ENCODE measurements at regions of chr14 and their contacts with region 1.

Region 1: GRCh38 chr14:35140718-35141581 is 18.6 kb downstream of the PRORP start:
- DNase-seq: no peak
- ATAC-seq: peak; percentile 60
- H3K4me3 ChIP-seq: no peak overlapping the region
- H3K27ac ChIP-seq: no peak overlapping the region
- H3K4me1 ChIP-seq: peaks cover 10% of the 10 kb centered on the region
- H3K27me3 ChIP-seq: no peaks in the 10 kb centered on the region
- CTCF ChIP-seq: peak in 2 of 3 experiments; percentile 11 to 23; a peak in 3 of 6 replicates
- EP300 ChIP-seq: no peak
- POLR2A ChIP-seq: no peak
- RAD21 ChIP-seq: peak; percentile 60

Region 2: GRCh38 chr14:35121887-35122695 is 18.9 kb before region 1 on chr14 and contains the starts of genes PPP2R3C and PRORP:
- CTCF ChIA-PET with region 1: interaction called, 29 read pairs
- POLR2A ChIA-PET with region 1: interaction called, 3 read pairs
- RAD21 ChIA-PET with region 1: interaction called, 11 read pairs
- SMC1A ChIA-PET with region 1: interaction called, 6 read pairs
- in situ Hi-C with region 1: no loop called
- intact Hi-C with region 1: no loop called
- DNase-seq: peak; percentile 94
- ATAC-seq: peak; percentile 92
- H3K4me3 ChIP-seq: peak within 1 kb of the TSS; percentile 83
- H3K27ac ChIP-seq: peak within 1 kb of the TSS; percentile 99
- H3K4me1 ChIP-seq: 0 out of 2 replicates have a peak, but pooled peaks cover 2% of the 10 kb centered on the region
- H3K27me3 ChIP-seq: no peaks in the 10 kb centered on the region
- CTCF ChIP-seq: no peak
- EP300 ChIP-seq: no peak; a peak in 1 of 4 replicates
- POLR2A ChIP-seq: peak; percentile 75
- RAD21 ChIP-seq: no peak
- polyA plus RNA-seq, gene PPP2R3C: 77.8 to 80.5 TPM
- polyA plus RNA-seq, gene PRORP: 45.2 TPM

Region 3: GRCh38 chr14:35215110-35215876 is 74.3 kb after region 1 on chr14:
- CTCF ChIA-PET with region 1: interaction called, 21 read pairs
- POLR2A ChIA-PET with region 1: interaction called, 4 read pairs
- RAD21 ChIA-PET with region 1: interaction called, 8 read pairs
- SMC1A ChIA-PET with region 1: interaction called, 10 read pairs
- in situ Hi-C with region 1: no loop called
- intact Hi-C with region 1: no loop called
- DNase-seq: no peak
- ATAC-seq: peak; percentile 63
- H3K4me3 ChIP-seq: no peak overlapping the region
- H3K27ac ChIP-seq: no peak overlapping the region
- H3K4me1 ChIP-seq: no peaks in the 10 kb centered on the region
- H3K27me3 ChIP-seq: no peaks in the 10 kb centered on the region
- CTCF ChIP-seq: peak; percentile 24 to 61 (median 31); a peak in 5 of 6 replicates
- EP300 ChIP-seq: no peak
- POLR2A ChIP-seq: no peak
- RAD21 ChIP-seq: peak; percentile 69

Region 4: DNA sequence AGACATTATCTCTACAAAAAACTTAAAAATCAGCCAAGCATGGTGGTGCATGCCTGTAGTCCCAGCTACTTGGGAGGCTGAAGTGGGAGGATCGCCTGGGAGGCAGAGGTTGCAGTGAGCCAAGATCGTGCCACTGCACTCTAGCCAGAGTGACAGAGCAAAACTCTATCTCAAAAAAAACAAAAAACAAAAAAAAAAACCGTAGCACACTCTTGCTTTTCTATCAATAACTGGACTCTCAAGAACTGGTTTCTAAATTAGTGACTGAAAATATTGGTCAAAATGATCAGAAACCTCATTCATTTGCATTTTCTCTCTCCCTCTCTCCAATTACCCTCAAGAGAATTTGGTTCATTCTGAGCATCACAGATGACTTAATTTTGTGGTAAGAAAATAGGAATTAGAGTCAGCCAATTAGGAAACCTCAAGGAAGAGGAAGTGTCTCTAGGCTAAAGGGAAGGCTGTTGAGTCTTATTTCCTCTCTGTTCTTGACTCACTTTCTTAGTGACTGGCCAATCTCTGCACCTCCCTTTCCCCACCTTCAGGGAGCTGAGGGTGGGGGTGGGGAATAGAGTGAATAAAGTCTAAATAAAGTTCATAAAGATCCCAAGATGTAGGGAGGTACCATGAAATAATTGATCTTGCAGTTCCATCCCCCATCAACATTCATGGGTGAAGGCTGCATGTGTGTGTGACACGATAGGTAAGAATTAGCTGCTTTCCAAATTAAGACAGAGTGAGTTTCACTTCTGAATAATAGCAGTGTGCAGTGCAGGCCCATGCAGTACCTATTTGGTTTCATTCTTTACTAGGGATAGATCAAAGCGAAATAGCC is 144.4 kb after region 1 on chr14:
- CTCF ChIA-PET with region 1: interaction called, 10 read pairs
- POLR2A ChIA-PET with region 1: no interaction called
- RAD21 ChIA-PET with region 1: interaction called, 11 read pairs
- SMC1A ChIA-PET with region 1: interaction called, 27 read pairs
- in situ Hi-C with region 1: no loop called
- intact Hi-C with region 1: loop called (anchors 5 kb)
- DNase-seq: peak; percentile 95
- ATAC-seq: peak; percentile 82
- H3K4me3 ChIP-seq: peak overlapping the region; percentile 51; the same call in 1 of the 2 replicates
- H3K27ac ChIP-seq: peak overlapping the region; percentile 91
- H3K4me1 ChIP-seq: peaks cover 53% of the 10 kb centered on the region
- H3K27me3 ChIP-seq: no peaks in the 10 kb centered on the region
- CTCF ChIP-seq: no peak
- EP300 ChIP-seq: peak; percentile 70 to 73; a peak in 3 of 4 replicates
- POLR2A ChIP-seq: no peak
- RAD21 ChIP-seq: peak; percentile 19; the same call in 1 of the 2 replicates

Region 5: GRCh38 chr14:35687335-35687939 is 546.5 kb after region 1 on chr14:
- CTCF ChIA-PET with region 1: interaction called, 32 read pairs
- POLR2A ChIA-PET with region 1: no interaction called
- RAD21 ChIA-PET with region 1: interaction called, 20 read pairs
- SMC1A ChIA-PET with region 1: interaction called, 7 read pairs
- in situ Hi-C with region 1: loop called (anchors 5 kb)
- intact Hi-C with region 1: loop called (anchors 5 kb)
- DNase-seq: peak; percentile 2
- ATAC-seq: peak; percentile 90
- H3K4me3 ChIP-seq: no peak overlapping the region
- H3K27ac ChIP-seq: no peak overlapping the region
- H3K4me1 ChIP-seq: peaks cover 15% of the 10 kb centered on the region; the same call in 1 of the 2 replicates
- H3K27me3 ChIP-seq: no peaks in the 10 kb centered on the region
- CTCF ChIP-seq: peak; percentile 71 to 89 (median 89)
- EP300 ChIP-seq: no peak
- POLR2A ChIP-seq: no peak
- RAD21 ChIP-seq: peak; percentile 99